ENCODE measurements at regions of chr20 and their contacts with region 1.

Region 1: DNA sequence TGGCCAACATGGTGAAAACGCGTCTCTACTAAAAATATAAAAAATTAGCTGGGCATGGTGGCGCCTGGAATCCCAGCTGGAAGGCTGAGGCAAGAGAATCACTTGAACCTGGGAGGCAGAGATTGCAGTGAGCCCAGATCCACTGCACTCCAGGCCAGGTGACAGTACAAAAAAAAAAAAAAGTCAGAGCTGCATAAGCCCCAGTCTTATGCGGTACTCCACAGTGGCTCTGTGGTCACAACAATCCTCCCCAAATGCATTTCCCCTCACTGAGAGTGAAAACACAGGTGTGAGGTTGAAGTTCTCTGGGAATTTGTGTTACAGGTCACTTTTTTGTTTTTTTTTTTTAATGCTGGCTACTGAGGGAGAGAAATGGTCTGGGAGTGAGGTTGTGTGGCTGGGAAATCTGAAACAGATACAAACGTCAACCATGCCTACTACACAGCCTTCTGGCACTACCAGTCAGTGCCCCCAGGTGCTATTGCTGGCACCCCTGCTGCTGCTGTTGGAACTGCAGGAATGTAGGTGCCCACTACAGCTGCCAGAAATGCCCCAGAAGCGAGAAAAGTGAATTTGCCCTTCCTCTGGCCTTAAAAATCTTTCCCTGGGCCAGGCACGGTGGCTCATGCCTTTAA is 5.7 kb downstream of the MRPS26 start:
- DNase-seq: no peak
- ATAC-seq: no peak
- H3K4me3 ChIP-seq: no peak overlapping the region
- H3K27ac ChIP-seq: no peak overlapping the region
- H3K4me1 ChIP-seq: no peaks in the 10 kb centered on the region
- H3K27me3 ChIP-seq: no peaks in the 10 kb centered on the region

Region 2: GRCh38 chr20:3109350-3110302 is 58.1 kb after region 1 on chr20:
- intact Hi-C with region 1: loop called in 3 of 4 experiments (anchors 5 to 10 kb)
- DNase-seq: no peak
- ATAC-seq: no peak
- H3K4me3 ChIP-seq: no peak overlapping the region
- H3K27ac ChIP-seq: no peak overlapping the region
- H3K4me1 ChIP-seq: no peaks in the 10 kb centered on the region
- H3K27me3 ChIP-seq: no peaks in the 10 kb centered on the region

Region 3: GRCh38 chr20:3115190-3116107 is 63.9 kb after region 1 on chr20:
- intact Hi-C with region 1: loop called (anchors 5 to 10 kb)
- DNase-seq: peak in 2 of 3 donors; percentile 61 to 62
- ATAC-seq: peak; percentile 19 to 41
- H3K4me3 ChIP-seq: no peak overlapping the region
- H3K27ac ChIP-seq: no peak overlapping the region
- H3K4me1 ChIP-seq: no peaks in the 10 kb centered on the region
- H3K27me3 ChIP-seq: no peaks in the 10 kb centered on the region

Region 4: DNA sequence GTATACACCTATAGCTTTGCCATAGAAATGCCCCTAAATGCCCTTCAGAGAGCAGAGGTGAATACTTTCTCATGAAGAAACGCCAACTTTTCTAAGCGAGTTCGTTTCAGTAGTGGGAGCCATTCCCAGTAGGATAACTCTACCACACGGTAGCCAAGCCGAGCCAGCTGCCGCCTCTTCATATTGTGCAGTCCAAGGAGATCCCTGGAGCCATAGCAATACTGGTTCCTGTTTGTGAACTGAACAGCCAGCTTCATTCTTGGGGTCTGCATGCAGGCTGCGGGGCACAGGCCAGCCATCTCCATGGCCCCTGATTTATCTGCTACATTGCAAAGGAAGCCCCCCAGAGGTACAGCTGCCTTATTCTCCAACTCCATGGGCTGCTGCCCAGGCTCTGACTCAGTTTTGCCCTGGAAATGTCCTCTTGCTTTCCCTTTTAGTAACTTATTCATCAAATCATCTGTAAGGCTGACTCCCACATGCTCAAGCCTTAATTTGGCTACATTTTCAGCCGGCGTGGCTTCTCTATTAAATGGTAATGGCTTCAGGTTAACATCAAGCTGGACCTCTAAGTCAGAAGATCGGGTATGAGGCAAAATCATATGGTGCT is 95.3 kb after region 1 on chr20:
- intact Hi-C with region 1: no loop called
- DNase-seq: no peak
- ATAC-seq: no peak
- H3K4me3 ChIP-seq: no peak overlapping the region
- H3K27ac ChIP-seq: no peak overlapping the region
- H3K4me1 ChIP-seq: peaks cover 3% of the 10 kb centered on the region
- H3K27me3 ChIP-seq: no peaks in the 10 kb centered on the region

Region 5: DNA sequence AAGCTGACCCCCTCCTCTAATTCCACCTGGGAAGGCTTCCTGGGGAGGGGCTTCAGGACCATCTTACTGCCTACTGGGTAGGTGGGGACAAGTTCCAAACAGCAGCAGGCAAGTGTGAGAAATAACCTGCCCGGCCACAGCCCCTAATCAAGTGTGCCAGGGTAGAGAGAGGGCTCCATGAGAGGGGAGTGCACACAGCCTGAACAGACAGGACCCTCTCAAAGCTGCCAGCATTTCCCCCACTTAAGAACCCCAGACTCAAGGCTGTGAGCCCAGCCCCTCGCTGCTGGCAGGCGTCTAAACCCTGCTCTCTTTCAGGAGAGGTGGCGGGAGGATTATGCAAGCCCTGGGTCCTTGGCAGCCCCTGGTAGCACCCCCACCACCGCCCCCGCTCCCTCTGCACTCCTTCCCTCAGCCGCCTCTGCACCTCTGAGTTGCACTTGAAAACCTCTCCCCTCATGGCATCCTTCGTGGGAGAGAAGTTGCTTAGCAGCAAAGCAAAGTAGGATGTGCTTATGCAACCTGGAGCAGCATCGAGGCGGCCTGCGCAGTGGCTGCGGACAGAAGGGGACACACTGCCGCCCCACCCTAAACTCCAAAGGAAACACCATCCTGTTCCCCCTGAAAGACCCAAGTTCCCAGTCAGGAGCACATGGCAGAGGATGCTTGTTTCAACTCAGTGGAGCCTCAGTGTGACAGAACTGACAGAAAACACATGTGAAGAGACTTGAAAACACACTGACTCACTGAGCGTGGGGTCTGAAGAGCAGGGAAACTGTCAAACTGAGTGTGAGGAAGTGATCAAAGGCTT is 142.5 kb after region 1 on chr20:
- intact Hi-C with region 1: no loop called
- DNase-seq: no peak
- ATAC-seq: no peak
- H3K4me3 ChIP-seq: no peak overlapping the region
- H3K27ac ChIP-seq: no peak overlapping the region
- H3K4me1 ChIP-seq: no peaks in the 10 kb centered on the region
- H3K27me3 ChIP-seq: no peaks in the 10 kb centered on the region

Region 6: GRCh38 chr20:3312940-3313682 is 261.6 kb after region 1 on chr20:
- intact Hi-C with region 1: loop called in 1 of 4 experiments (anchors 10 kb)
- DNase-seq: no peak
- ATAC-seq: peak; percentile 84 to 90
- H3K4me3 ChIP-seq: no peak overlapping the region
- H3K27ac ChIP-seq: peak overlapping the region; percentile 82
- H3K4me1 ChIP-seq: peaks cover 11% of the 10 kb centered on the region
- H3K27me3 ChIP-seq: no peaks in the 10 kb centered on the region

Region 7: DNA sequence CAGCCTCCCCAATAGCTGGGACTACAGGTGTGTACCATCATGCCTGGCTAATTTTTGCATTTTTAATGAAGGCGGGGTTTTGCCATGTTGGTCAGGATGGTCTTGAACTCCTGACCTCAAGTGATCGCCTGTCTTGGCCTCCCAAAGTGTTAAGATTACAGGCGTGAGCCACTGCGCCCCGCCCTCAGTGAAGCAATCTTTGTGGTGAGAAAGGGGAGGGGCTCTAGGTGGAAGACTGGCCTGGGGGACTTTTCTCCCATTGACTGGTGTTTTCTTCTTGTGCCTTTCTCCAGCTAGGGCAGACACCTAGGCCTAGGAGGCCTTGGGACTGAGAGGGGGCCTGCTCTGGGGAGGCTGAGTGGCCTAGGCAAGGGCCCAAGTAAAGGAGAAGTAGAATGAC is 271.9 kb after region 1 on chr20:
- intact Hi-C with region 1: loop called in 3 of 4 experiments (anchors 10 kb)
- DNase-seq: peak in 2 of 3 donors; percentile 56 to 66
- ATAC-seq: peak; percentile 19 to 26
- H3K4me3 ChIP-seq: no peak overlapping the region
- H3K27ac ChIP-seq: no peak overlapping the region
- H3K4me1 ChIP-seq: no peaks in the 10 kb centered on the region
- H3K27me3 ChIP-seq: no peaks in the 10 kb centered on the region